Activated T-helper 2 cell treated with anti-CD3 and anti-CD28 coated beads, Interferon-gamma antibody, Interleukin-2, Interleukin-4, amounts not matched to agents 10 μg/mL and 5 μg/mL and 100 μg/mL, durations not matched to agents 14 hours and 24 hours and 36 hours (primary cell): ENCODE measurements at regions of chr10 and their contacts with region 1.

Region 1: GRCh38 chr10:110414563-110415309 is 83.0 kb upstream of the DUSP5 start:
- DNase-seq: peak; percentile 84
- H3K4me3 Mint-ChIP-seq: peak overlapping the region; percentile 61
- H3K27ac Mint-ChIP-seq: peak overlapping the region; percentile 90
- H3K4me1 Mint-ChIP-seq: peaks cover 70% of the 10 kb centered on the region
- H3K27me3 Mint-ChIP-seq: no peaks in the 10 kb centered on the region

Region 2: GRCh38 chr10:110326351-110327032 is 88.2 kb before region 1 on chr10:
- intact Hi-C with region 1: loop called (anchors 1 kb)
- DNase-seq: no peak
- H3K4me3 Mint-ChIP-seq: no peak overlapping the region
- H3K27ac Mint-ChIP-seq: peak overlapping the region; percentile 12
- H3K4me1 Mint-ChIP-seq: peaks cover 46% of the 10 kb centered on the region
- H3K27me3 Mint-ChIP-seq: no peaks in the 10 kb centered on the region

Region 3: DNA sequence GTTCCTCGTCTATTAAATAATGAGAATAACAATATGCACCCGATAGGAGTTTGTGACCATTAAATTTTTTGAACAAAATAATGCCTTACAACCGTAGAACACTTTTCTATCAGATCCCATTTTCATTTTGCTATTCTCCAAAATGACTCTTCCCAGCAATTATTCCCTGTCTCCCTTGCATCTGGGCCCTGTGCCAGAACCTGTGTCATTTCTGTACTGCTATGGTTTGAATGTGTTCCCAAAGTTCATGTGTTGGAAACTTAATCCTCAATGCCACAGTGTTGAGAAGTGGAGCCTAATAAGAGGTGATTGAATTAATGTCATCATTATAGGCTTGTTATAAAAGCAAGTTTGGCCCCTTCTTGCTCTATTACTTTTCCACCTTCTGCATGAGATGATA is 76.8 kb before region 1 on chr10:
- intact Hi-C with region 1: no loop called
- DNase-seq: no peak
- H3K4me3 Mint-ChIP-seq: no peak overlapping the region
- H3K27ac Mint-ChIP-seq: no peak overlapping the region
- H3K4me1 Mint-ChIP-seq: peaks cover 29% of the 10 kb centered on the region
- H3K27me3 Mint-ChIP-seq: no peaks in the 10 kb centered on the region

Region 4: GRCh38 chr10:110497438-110498086 is 82.8 kb after region 1 on chr10 and contains the start of gene DUSP5:
- intact Hi-C with region 1: loop called (anchors 1 kb)
- DNase-seq: peak; percentile 95
- H3K4me3 Mint-ChIP-seq: peak within 1 kb of the TSS; percentile 97
- H3K27ac Mint-ChIP-seq: peak within 1 kb of the TSS; percentile 84
- H3K4me1 Mint-ChIP-seq: peaks cover 47% of the 10 kb centered on the region
- H3K27me3 Mint-ChIP-seq: no peaks in the 10 kb centered on the region
- total RNA-seq, gene DUSP5: 84.3 and 86.2 TPM in 2 replicates

Region 5: DNA sequence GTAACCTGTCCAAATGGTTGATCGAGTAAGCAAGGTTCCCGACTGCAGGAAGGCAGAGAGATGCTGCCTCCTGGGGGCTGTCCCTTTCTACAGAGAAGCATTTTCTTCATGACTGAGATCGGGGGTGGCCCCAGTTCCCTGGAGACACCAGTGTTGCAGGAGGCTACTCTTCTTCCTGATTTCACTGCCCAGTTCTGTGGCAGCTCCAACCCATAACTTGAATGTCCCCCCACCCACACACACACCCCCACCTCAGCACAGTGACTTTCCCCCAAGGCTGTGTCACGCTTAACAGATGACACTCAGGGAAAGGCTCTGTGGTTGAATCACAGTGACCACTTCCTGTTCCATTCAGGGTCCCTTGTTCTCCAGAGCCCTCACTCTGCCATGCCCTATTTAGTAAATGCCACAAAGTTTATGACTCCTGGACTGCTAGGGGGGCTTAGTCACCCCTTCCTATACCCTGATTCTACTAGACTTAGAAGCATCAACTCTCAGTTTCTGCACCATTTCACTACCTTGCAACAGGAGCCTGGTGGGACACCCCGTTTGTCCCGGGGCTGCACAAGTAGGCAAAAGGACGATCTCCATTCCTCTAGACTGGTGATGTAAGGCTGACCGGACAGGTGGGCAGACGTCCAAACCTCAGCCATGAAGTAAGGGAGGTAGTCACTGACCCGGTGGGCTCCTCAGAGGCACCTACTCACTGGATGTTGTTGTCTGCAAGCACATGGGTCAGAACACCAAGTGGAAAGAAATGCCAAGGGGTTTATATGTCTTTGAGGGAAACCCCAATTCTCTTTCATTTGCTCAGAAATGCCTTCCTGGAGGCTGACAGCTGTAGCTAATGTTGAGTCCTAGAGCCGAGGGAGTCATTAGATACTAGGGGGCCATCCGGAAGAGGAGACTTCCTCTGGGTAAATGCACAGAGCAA is 121.5 kb after region 1 on chr10:
- intact Hi-C with region 1: loop called (anchors 1 kb)
- DNase-seq: peak; percentile 42
- H3K4me3 Mint-ChIP-seq: peak overlapping the region; percentile 27
- H3K27ac Mint-ChIP-seq: peak overlapping the region; percentile 92
- H3K4me1 Mint-ChIP-seq: peaks cover 55% of the 10 kb centered on the region
- H3K27me3 Mint-ChIP-seq: no peaks in the 10 kb centered on the region